GM10248 (cell line): ENCODE measurements at regions of chr17 and their contacts with region 1.

Region 1: DNA sequence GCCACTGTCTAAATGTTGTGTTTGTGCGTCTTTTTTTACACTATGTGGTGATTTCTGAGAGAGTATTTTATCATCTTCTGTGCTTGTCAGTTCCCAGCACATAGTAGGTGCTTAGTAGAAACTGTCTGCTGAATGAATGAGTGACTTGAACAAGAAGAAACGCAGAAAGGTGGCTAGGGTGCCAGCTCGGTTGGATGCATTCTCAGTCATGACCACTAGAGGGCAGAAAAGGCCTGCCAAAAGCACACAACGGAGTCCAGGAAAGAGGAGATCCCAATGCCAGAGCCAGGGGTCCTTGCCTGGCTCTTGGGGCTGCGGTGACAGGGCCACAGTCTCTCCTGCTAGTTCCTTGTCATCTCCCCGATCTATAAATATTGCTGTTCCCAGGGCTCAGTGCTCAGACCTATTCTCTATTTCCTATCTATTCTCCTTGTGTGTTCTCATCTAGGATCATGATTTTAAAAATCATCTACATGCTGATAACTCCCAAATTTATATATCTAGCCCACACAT is 57.3 kb upstream of the CCL1 start:
- DNase-seq: peak; percentile 71
- CTCF ChIP-seq: peak; percentile 89

Region 2: GRCh38 chr17:34354637-34355036 is 65.7 kb before region 1 on chr17:
- CTCF ChIA-PET with region 1: no interaction called
- POLR2A ChIA-PET with region 1: no interaction called
- DNase-seq: no peak
- CTCF ChIP-seq: no peak

Region 3: DNA sequence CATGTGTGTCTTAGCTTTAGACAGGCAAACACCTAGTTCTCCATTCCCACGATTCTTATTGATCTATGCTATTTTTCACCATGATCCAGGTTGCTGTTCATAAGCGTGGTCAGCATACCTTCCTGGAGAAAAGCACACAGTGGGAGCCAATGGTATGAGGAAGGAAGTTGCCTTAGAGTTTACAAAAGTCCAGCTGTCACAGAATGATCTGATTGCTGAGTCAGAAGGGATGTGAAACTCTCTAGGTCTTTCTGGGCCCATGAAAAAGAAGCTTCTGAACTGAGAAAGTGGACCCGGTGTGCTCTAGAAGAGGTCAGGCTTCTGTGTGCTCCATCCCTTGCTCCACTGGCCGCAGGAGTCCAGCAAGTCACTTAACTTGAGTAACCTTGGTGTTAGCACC is 13.7 kb after region 1 on chr17:
- CTCF ChIA-PET with region 1: interaction called, 10 read pairs
- POLR2A ChIA-PET with region 1: no interaction called
- DNase-seq: no peak
- CTCF ChIP-seq: no peak

Region 4: GRCh38 chr17:34452769-34453168 is 32.5 kb after region 1 on chr17:
- CTCF ChIA-PET with region 1: no interaction called
- POLR2A ChIA-PET with region 1: no interaction called
- DNase-seq: no peak
- CTCF ChIP-seq: no peak

Region 5: DNA sequence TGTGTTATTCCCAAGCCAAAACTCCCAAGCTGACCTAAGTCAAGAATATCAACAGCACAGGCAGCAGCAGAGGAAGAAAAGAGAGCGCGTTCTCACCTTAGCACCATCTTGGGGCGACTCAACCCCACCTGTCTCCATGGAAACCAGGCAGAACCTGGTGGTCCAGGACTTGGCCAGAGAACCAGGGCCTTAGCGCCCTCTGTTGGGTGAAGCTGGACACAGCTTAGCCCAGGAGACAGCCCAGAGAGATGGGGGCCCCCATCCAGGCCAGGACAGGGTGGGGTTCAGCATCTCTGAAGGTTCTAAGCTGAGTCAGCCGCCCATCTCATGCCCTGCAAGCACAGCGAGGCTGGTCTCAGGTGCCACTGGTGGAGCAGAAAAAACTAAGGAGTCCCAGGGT is 99.0 kb after region 1 on chr17:
- CTCF ChIA-PET with region 1: interaction called, 13 read pairs
- POLR2A ChIA-PET with region 1: no interaction called
- DNase-seq: peak; percentile 38
- CTCF ChIP-seq: peak; percentile 49